Esophagus squamous epithelium (tissue), 5 donors: ENCODE measurements at regions of chr6 and their contacts with region 1.

Region 1: GRCh38 chr6:3124667-3125066 is 6.2 kb downstream of the BPHL start:
- DNase-seq: no peak
- H3K4me3 ChIP-seq: no peak overlapping the region
- H3K27ac ChIP-seq: no peak overlapping the region
- H3K4me1 ChIP-seq: peaks cover 4 to 18% (median 9%) of the 10 kb centered on the region in 3 donors
- H3K27me3 ChIP-seq: no peaks in the 10 kb centered on the region
- CTCF ChIP-seq: no peak
- POLR2A ChIP-seq: no peak

Region 2: GRCh38 chr6:3031857-3032640 is 92.6 kb before region 1 on chr6:
- intact Hi-C with region 1: no loop called
- DNase-seq: no peak
- H3K4me3 ChIP-seq: no peak overlapping the region
- H3K27ac ChIP-seq: no peak overlapping the region
- H3K4me1 ChIP-seq: peaks cover 0 to 8% (median 0%) of the 10 kb centered on the region in 3 donors
- H3K27me3 ChIP-seq: no peaks in the 10 kb centered on the region
- CTCF ChIP-seq: no peak
- POLR2A ChIP-seq: no peak

Region 3: GRCh38 chr6:3211681-3212080 is 87.0 kb after region 1 on chr6:
- intact Hi-C with region 1: no loop called
- DNase-seq: no peak
- H3K4me3 ChIP-seq: no peak overlapping the region
- H3K27ac ChIP-seq: peak overlapping the region in 1 of 4 donors; percentile 31
- H3K4me1 ChIP-seq: peaks cover 14 to 30% (median 26%) of the 10 kb centered on the region in 3 donors
- H3K27me3 ChIP-seq: no peaks in the 10 kb centered on the region
- CTCF ChIP-seq: no peak
- POLR2A ChIP-seq: no peak

Region 4: GRCh38 chr6:3251462-3252314 is 127.0 kb after region 1 on chr6:
- intact Hi-C with region 1: loop called (anchors 5 kb)
- DNase-seq: peak; percentile 14
- H3K4me3 ChIP-seq: peak overlapping the region in 1 of 4 donors; percentile 21
- H3K27ac ChIP-seq: no peak overlapping the region
- H3K4me1 ChIP-seq: peaks cover 0 to 32% (median 0%) of the 10 kb centered on the region in 3 donors
- H3K27me3 ChIP-seq: peaks cover 0 to 30% (median 0%) of the 10 kb centered on the region in 4 donors
- CTCF ChIP-seq: peak; percentile 95 to 98 (median 96)
- POLR2A ChIP-seq: no peak